ENCODE measurements at regions of chr2 and their contacts with region 1.

Region 1: DNA sequence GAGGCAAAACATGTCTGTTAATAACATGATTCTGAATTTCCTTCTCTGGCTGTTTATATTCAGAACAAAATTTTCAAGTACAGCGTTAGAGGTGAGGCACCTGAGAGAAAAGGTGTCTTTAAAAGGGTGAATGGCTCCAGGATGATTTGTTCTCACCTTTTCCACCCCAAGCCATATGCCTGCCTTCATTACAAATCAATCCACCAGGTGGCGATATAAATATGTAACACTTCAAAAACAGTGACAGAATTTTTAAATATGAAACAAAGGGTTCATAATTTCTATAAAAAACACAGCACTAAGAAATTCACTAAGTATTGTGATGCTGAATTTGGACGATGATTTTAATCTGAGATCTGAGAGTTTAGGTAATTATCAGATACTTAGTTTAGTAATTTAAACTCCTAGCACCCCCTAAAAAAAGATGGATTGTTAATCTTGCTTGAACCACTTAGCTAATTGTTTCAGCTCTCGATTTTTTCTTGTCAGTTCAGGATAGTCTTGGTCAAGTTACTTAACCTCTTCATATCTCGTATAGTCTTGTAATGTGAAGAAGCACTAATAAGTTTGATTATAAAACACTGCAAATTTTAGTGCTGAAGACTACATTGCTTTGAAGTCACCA is 528.8 kb downstream of the CPS1 start:
- DNase-seq: no peak
- H3K4me3 ChIP-seq: no peak overlapping the region
- H3K27ac ChIP-seq: no peak overlapping the region
- H3K4me1 ChIP-seq: no peaks in the 10 kb centered on the region
- H3K27me3 ChIP-seq: no peaks in the 10 kb centered on the region
- CTCF ChIP-seq: peak in 2 of 3 experiments; percentile 37 to 54; a peak in 2 of 4 replicates
- EP300 ChIP-seq: no peak
- POLR2A ChIP-seq: no peak
- RAD21 ChIP-seq: peak; percentile 50

Region 2: GRCh38 chr2:211055438-211055837 is 29.7 kb before region 1 on chr2:
- CTCF ChIA-PET with region 1: interaction called, 12 read pairs
- POLR2A ChIA-PET with region 1: no interaction called
- DNase-seq: peak; percentile 5 to 50
- H3K4me3 ChIP-seq: no peak overlapping the region
- H3K27ac ChIP-seq: no peak overlapping the region
- H3K4me1 ChIP-seq: no peaks in the 10 kb centered on the region
- H3K27me3 ChIP-seq: no peaks in the 10 kb centered on the region
- CTCF ChIP-seq: peak; percentile 58 to 74 (median 64)
- EP300 ChIP-seq: no peak
- POLR2A ChIP-seq: no peak
- RAD21 ChIP-seq: peak; percentile 81

Region 3: DNA sequence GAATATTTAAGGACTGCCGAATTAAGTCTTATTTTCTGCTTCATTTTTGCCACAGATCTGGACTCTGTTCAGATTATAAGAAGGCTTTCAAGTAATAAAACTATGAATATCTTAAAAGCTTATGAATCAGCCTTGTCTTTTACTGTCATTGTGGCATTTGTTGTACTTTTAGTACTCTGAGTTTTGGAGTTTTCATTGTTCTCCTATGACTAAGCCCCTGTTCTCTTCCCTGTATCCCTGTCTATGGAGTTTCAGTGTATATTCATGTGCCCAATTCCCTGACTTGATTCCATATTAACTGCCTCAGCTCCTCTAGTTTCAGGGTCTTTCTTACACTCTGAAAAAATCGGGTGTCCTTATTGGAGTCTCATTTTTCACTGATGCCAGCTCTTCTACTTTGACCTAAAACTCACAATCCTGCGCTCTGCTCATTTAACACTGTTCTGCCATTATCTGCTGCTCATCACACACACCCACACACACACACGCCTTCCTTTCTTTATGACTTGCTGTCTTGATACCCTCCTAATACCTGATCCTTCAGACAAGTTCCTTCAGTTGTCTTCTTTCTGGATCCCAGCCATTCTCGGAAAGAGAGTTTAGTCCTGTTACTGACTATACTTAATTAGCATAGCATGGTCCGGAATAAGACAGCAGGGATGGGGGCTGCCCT is 16.9 kb before region 1 on chr2:
- CTCF ChIA-PET with region 1: interaction called, 15 read pairs
- POLR2A ChIA-PET with region 1: no interaction called
- DNase-seq: no peak
- H3K4me3 ChIP-seq: no peak overlapping the region
- H3K27ac ChIP-seq: no peak overlapping the region
- H3K4me1 ChIP-seq: no peaks in the 10 kb centered on the region
- H3K27me3 ChIP-seq: no peaks in the 10 kb centered on the region
- CTCF ChIP-seq: no peak
- EP300 ChIP-seq: no peak
- POLR2A ChIP-seq: no peak
- RAD21 ChIP-seq: no peak

Region 4: DNA sequence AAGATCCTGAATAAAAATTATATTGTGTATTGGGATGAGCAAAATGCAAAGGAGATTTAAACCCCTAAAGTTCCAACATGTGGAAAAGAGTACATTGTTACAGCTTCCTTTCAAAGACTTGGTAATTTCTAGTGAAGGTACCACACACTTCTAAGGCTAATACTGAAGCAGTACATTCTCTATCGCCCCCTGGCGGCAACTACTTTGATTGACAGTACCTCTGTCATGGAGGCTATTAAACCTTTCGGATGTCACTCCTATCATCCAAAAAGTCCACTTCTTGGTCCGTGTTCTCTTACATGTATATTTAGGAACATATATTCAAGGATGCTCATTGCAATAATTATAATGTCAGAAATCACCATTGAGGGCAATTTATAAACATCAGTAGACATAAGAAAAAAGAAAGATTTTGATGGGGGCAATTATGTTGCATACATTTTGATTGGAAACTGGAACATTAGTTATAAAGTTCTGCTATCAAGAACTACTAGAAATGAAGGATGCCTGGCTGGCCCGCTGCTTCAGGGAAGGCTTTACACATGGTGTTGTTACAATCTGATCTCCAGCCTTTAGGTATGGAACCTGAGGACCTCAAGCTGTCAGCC is 72.8 kb after region 1 on chr2:
- CTCF ChIA-PET with region 1: interaction called, 23 read pairs
- POLR2A ChIA-PET with region 1: no interaction called
- DNase-seq: peak in 1 of 2 experiments; percentile 88
- H3K4me3 ChIP-seq: no peak overlapping the region
- H3K27ac ChIP-seq: no peak overlapping the region
- H3K4me1 ChIP-seq: no peaks in the 10 kb centered on the region
- H3K27me3 ChIP-seq: peaks cover 0 to 1% (median 0%) of the 10 kb centered on the region in 4 experiments; a peak in 1 of 7 replicates
- CTCF ChIP-seq: peak in 2 of 3 experiments; percentile 71 to 80; a peak in 3 of 4 replicates
- EP300 ChIP-seq: no peak
- POLR2A ChIP-seq: no peak
- RAD21 ChIP-seq: peak; percentile 72 to 78